ENCODE measurements at regions of chr1 and their contacts with region 1.

Region 1: GRCh38 chr1:17494114-17494729 is 45.3 kb upstream of the ARHGEF10L start:
- DNase-seq: peak; percentile 44 to 76
- ATAC-seq: peak; percentile 79

Region 2: GRCh38 chr1:17045634-17046333 is 448.4 kb before region 1 on chr1:
- intact Hi-C with region 1: no loop called
- DNase-seq: no peak
- ATAC-seq: peak; percentile 50

Region 3: DNA sequence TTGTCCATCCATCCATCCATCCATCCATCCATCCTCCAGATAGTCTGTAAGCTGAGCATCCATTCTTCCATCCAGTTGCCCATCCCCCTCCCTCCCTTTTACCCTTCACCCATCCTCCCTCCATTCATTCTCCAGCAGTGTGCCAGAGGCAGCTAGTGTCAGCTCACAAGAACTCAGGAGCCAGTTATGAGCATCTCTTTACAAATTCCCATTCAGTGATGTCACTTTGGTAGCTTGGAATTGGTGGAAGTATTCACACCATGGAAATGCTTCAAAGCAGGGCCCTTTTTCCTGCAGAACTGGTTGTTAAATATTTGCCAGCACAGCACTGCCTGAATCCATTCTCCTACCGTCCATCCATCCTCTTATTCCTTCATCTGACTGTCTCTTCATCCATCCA is 117.8 kb after region 1 on chr1:
- intact Hi-C with region 1: loop called in 1 of 2 experiments (anchors 5 kb)
- DNase-seq: no peak
- ATAC-seq: no peak

Measured in left colon (tissue), 2 donors.